ENCODE measurements at regions of chr1 and their contacts with region 1.

Region 1: GRCh38 chr1:224329842-224330753 is at the start of gene NVL:
- DNase-seq: peak; percentile 86
- ATAC-seq: peak; percentile 89
- H3K4me3 ChIP-seq: peak within 1 kb of the TSS; percentile 93 to 99
- H3K27ac ChIP-seq: peak within 1 kb of the TSS; percentile 82
- H3K4me1 ChIP-seq: peaks cover 12 to 16% of the 10 kb centered on the region in 2 experiments
- H3K27me3 ChIP-seq: no peaks in the 10 kb centered on the region
- CTCF ChIP-seq: no peak
- POLR2A ChIP-seq: peak; percentile 15
- RAD21 ChIP-seq: peak; percentile 31; the same call in 1 of the 2 replicates
- total RNA-seq, gene NVL: 21.9 TPM

Region 2: GRCh38 chr1:223811634-223812415 is 518.3 kb before region 1 on chr1:
- CTCF ChIA-PET with region 1: no interaction called
- POLR2A ChIA-PET with region 1: no interaction called
- RAD21 ChIA-PET with region 1: no interaction called
- intact Hi-C with region 1: loop called (anchors 10 kb)
- DNase-seq: peak; percentile 15
- ATAC-seq: peak; percentile 71
- H3K4me3 ChIP-seq: no peak overlapping the region
- H3K27ac ChIP-seq: no peak overlapping the region
- H3K4me1 ChIP-seq: peaks cover 0 to 30% of the 10 kb centered on the region in 2 experiments; a peak in 2 of 4 replicates
- H3K27me3 ChIP-seq: no peaks in the 10 kb centered on the region
- CTCF ChIP-seq: peak; percentile 31 to 70 (median 58); a peak in 5 of 6 replicates
- POLR2A ChIP-seq: no peak
- RAD21 ChIP-seq: peak; percentile 84

Measured in HCT116 (cell line).